Dorsolateral prefrontal cortex (tissue), 120 donors: ENCODE measurements at regions of chr7 and their contacts with region 1.

Region 1: GRCh38 chr7:116671681-116672595 is at the start of gene MET:
- DNase-seq: peak; percentile 5 to 84 (median 67)
- H3K4me3 ChIP-seq: peak within 1 kb of the TSS; percentile 45 to 80 (median 68)
- H3K27ac ChIP-seq: peak within 1 kb of the TSS in 47 of 59 donors; percentile 8 to 93 (median 74)
- H3K27me3 ChIP-seq: peaks cover 0 to 14% (median 0%) of the 10 kb centered on the region in 45 donors
- CTCF ChIP-seq: peak in 53 of 56 donors; percentile 22 to 83 (median 54)
- total RNA-seq, gene MET: 2.1 to 40.6 (median 13.7) TPM

Region 2: GRCh38 chr7:116501425-116502167 is 170.3 kb before region 1 on chr7:
- intact Hi-C with region 1: no loop called
- DNase-seq: no peak
- H3K4me3 ChIP-seq: peak overlapping the region in 20 of 59 donors; percentile 4 to 84 (median 70)
- H3K27ac ChIP-seq: peak overlapping the region in 3 of 59 donors; percentile 16 to 83 (median 55)
- H3K27me3 ChIP-seq: peaks cover 0 to 28% (median 7%) of the 10 kb centered on the region in 45 donors
- CTCF ChIP-seq: no peak

Region 3: GRCh38 chr7:116598278-116598677 is 73.7 kb before region 1 on chr7:
- intact Hi-C with region 1: loop called in 1 of 2 experiments (anchors 5 kb)
- DNase-seq: peak in 6 of 10 donors; percentile 24 to 45 (median 32)
- H3K4me3 ChIP-seq: peak overlapping the region in 4 of 59 donors; percentile 6 to 38 (median 34)
- H3K27ac ChIP-seq: peak overlapping the region in 51 of 59 donors; percentile 3 to 92 (median 70)
- H3K27me3 ChIP-seq: peaks cover 0 to 5% (median 0%) of the 10 kb centered on the region in 45 donors
- CTCF ChIP-seq: peak in 46 of 56 donors; percentile 11 to 69 (median 44)

Region 4: GRCh38 chr7:116802746-116803152 is 130.8 kb after region 1 on chr7:
- intact Hi-C with region 1: loop called in 1 of 2 experiments (anchors 2 kb)
- DNase-seq: peak in 3 of 10 donors; percentile 10 to 71 (median 60)
- H3K4me3 ChIP-seq: peak overlapping the region in 3 of 59 donors; percentile 21 to 23 (median 22)
- H3K27ac ChIP-seq: peak overlapping the region in 51 of 59 donors; percentile 4 to 97 (median 81)
- H3K27me3 ChIP-seq: peaks cover 0 to 2% (median 0%) of the 10 kb centered on the region in 45 donors
- CTCF ChIP-seq: peak in 55 of 56 donors; percentile 25 to 76 (median 54)

Region 5: GRCh38 chr7:116862234-116862950 is 190.5 kb after region 1 on chr7 and contains the start of gene CAPZA2:
- intact Hi-C with region 1: loop called in 1 of 2 experiments (anchors 5 kb)
- DNase-seq: peak; percentile 81 to 95 (median 88)
- H3K4me3 ChIP-seq: peak within 1 kb of the TSS; percentile 64 to 99 (median 92)
- H3K27ac ChIP-seq: peak within 1 kb of the TSS; percentile 90 to 100 (median 98)
- H3K27me3 ChIP-seq: no peaks in the 10 kb centered on the region
- CTCF ChIP-seq: peak in 45 of 56 donors; percentile 4 to 59 (median 34)
- total RNA-seq, gene CAPZA2: 89.4 to 257 (median 182) TPM